Activated CD4-positive, alpha-beta memory T cell treated with anti-CD3 and anti-CD28 coated beads for 36 hours (primary cell): ENCODE measurements at regions of chr19 and their contacts with region 1.

Region 1: DNA sequence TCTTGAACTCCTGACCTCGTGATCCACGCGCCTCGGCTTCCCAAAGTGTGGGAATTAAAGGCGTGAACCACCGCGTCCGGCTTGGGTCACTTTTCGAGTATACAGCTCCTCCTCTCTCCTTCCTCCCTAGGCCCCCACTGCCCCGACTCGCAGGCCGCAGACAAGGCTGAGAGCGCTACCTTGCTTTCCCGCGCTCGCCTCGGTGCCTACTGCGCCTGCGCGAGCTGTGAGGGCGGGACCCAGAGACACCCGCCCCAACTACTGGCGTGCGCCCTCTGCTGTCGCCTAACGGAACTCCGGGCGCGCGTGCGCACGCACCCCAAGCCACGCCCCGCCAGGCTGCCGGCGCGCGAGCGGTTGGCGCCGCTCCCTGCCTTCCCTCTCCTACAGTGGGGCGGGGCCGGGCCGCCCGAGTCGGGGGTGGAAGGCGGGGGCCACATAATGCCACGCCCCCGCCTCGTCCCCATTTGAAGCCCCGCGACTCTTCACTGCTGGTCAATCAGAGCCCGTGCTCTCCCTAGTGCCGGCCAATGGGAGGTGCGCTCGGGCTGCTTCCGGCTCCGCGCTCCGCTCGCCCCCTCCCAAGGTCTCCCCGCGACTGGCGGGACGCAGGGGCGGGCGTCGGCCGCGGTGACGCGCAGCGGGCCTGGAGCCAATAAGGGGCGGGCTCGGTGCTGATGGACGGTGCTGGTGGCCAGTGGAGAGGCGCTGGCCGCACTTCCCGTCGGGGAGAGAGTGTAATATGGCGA is at the start of gene RAB8A:
- DNase-seq: peak; percentile 99
- H3K4me3 Mint-ChIP-seq: peak within 1 kb of the TSS; percentile 98
- H3K27ac Mint-ChIP-seq: peak within 1 kb of the TSS; percentile 97
- H3K4me1 Mint-ChIP-seq: peaks cover 40% of the 10 kb centered on the region
- H3K27me3 Mint-ChIP-seq: no peaks in the 10 kb centered on the region
- total RNA-seq, gene RAB8A: 146 to 154 TPM

Region 2: DNA sequence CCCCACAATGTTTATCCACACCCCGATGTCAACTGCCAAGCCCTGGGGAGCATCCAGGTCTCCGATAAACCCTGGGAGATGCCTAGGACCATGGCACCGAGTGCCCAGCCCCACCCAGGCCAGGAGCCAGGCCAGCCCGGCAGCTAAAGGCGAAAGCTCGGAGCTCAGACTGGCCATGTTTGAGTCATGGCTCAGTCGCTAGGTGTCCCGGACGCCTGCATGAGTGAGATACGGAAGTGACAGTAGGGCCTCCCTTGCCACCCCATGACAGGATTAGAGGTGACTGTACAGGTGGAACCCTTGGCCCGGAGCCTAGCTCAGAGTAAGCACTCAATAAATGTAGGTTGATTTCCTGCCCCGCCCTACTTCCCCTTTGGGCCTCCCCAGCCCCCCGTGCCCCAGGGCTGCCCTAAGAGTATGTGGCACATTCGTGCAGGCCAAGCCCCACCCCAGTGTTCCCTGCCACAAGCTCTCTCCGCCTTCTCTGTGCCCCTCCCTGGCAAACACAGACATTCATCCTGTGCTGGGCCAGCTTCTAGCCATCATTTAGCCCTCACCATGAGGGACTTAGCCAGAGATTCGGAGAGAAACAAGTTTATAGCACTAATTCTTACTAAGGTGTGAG is 40.9 kb before region 1 on chr19:
- CTCF ChIA-PET with region 1: interaction called, 14 read pairs
- POLR2A ChIA-PET with region 1: interaction called, 7 read pairs
- intact Hi-C with region 1: no loop called
- DNase-seq: peak; percentile 94
- H3K4me3 Mint-ChIP-seq: no peak overlapping the region
- H3K27ac Mint-ChIP-seq: no peak overlapping the region
- H3K4me1 Mint-ChIP-seq: peaks cover 43% of the 10 kb centered on the region
- H3K27me3 Mint-ChIP-seq: no peaks in the 10 kb centered on the region

Region 3: GRCh38 chr19:16088351-16089009 is 22.9 kb before region 1 on chr19:
- CTCF ChIA-PET with region 1: interaction called, 18 read pairs
- POLR2A ChIA-PET with region 1: interaction called, 7 read pairs
- intact Hi-C with region 1: no loop called
- DNase-seq: no peak
- H3K4me3 Mint-ChIP-seq: no peak overlapping the region
- H3K27ac Mint-ChIP-seq: peak overlapping the region; percentile 56
- H3K4me1 Mint-ChIP-seq: peaks cover 51% of the 10 kb centered on the region
- H3K27me3 Mint-ChIP-seq: no peaks in the 10 kb centered on the region

Region 4: GRCh38 chr19:16095071-16095571 is 16.2 kb before region 1 on chr19:
- CTCF ChIA-PET with region 1: interaction called, 19 read pairs
- POLR2A ChIA-PET with region 1: interaction called, 5 read pairs
- intact Hi-C with region 1: no loop called
- DNase-seq: peak; percentile 44
- H3K4me3 Mint-ChIP-seq: no peak overlapping the region
- H3K27ac Mint-ChIP-seq: peak overlapping the region; percentile 84
- H3K4me1 Mint-ChIP-seq: peaks cover 26% of the 10 kb centered on the region
- H3K27me3 Mint-ChIP-seq: no peaks in the 10 kb centered on the region

Region 5: GRCh38 chr19:16247353-16248182 is 136.2 kb after region 1 on chr19:
- CTCF ChIA-PET with region 1: no interaction called
- POLR2A ChIA-PET with region 1: no interaction called
- intact Hi-C with region 1: no loop called
- DNase-seq: peak; percentile 88
- H3K4me3 Mint-ChIP-seq: no peak overlapping the region
- H3K27ac Mint-ChIP-seq: no peak overlapping the region
- H3K4me1 Mint-ChIP-seq: peaks cover 12% of the 10 kb centered on the region
- H3K27me3 Mint-ChIP-seq: no peaks in the 10 kb centered on the region